Calu3 (cell line): ENCODE measurements at regions of chr1 and their contacts with region 1.

Region 1: GRCh38 chr1:228938537-228938901 is 203.2 kb downstream of the RHOU start:
- DNase-seq: no peak
- H3K4me3 Mint-ChIP-seq: no peak overlapping the region
- H3K27ac Mint-ChIP-seq: no peak overlapping the region
- H3K4me1 Mint-ChIP-seq: peaks cover 40% of the 10 kb centered on the region
- H3K27me3 Mint-ChIP-seq: peaks cover 8% of the 10 kb centered on the region
- CTCF ChIP-seq: no peak

Region 2: DNA sequence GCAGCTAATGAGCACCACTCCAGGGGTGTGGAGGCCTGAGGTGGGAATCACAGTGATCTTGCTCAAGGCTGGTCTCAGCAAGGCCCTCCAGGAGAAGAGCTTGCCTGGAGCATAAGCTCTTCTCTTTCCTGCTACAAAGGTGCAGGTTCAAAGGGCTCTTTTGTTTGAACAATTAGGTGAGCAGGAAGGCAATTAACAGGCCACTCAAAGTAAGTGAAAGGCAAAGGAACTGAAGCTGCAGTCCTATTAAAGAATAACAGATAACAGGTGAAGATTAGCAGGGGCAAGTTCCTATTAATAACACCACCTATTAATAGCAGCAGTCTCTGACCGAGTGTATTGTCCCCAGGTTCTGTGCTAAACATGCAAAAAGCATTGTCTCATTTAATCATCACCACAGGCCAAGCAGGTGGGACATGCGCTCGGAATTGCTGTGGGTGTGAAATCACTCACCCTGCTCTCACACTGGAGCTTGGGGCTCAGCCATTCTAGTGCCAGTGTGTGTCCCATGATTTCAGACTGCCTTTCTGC is 89.4 kb before region 1 on chr1:
- CTCF ChIA-PET with region 1: no interaction called
- intact Hi-C with region 1: loop called (anchors 5 kb)
- DNase-seq: no peak
- H3K4me3 Mint-ChIP-seq: no peak overlapping the region
- H3K27ac Mint-ChIP-seq: no peak overlapping the region
- H3K4me1 Mint-ChIP-seq: peaks cover 39% of the 10 kb centered on the region
- H3K27me3 Mint-ChIP-seq: no peaks in the 10 kb centered on the region
- CTCF ChIP-seq: no peak

Region 3: DNA sequence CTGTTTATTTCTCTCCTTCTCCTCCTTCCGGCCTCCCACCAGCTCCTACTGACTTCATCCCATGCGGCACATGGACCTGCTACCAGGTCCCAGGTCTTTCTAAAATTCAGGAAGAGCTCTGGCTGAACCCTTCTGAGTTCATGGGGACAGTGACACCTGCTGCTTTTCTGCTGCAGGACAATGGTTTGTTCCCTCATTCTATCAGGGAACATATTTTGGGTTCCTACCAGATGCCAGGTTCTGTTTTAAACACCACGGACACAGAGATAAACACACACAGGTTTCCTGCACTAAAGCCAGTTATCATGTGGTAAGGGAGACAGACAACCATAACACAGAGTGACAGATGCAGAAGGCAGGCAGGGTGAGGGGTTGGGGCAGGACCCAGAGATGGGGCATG is 218.4 kb after region 1 on chr1:
- CTCF ChIA-PET with region 1: no interaction called
- intact Hi-C with region 1: loop called (anchors 10 kb)
- DNase-seq: peak; percentile 38
- H3K4me3 Mint-ChIP-seq: no peak overlapping the region
- H3K27ac Mint-ChIP-seq: no peak overlapping the region
- H3K4me1 Mint-ChIP-seq: peaks cover 8% of the 10 kb centered on the region
- H3K27me3 Mint-ChIP-seq: no peaks in the 10 kb centered on the region
- CTCF ChIP-seq: peak; percentile 37

Region 4: GRCh38 chr1:229596925-229597699 is 658.6 kb after region 1 on chr1:
- CTCF ChIA-PET with region 1: no interaction called
- intact Hi-C with region 1: no loop called
- DNase-seq: no peak
- H3K4me3 Mint-ChIP-seq: no peak overlapping the region
- H3K27ac Mint-ChIP-seq: no peak overlapping the region
- H3K4me1 Mint-ChIP-seq: no peaks in the 10 kb centered on the region
- H3K27me3 Mint-ChIP-seq: no peaks in the 10 kb centered on the region
- CTCF ChIP-seq: no peak